MCF 10A (cell line): ENCODE measurements at regions of chr18 and their contacts with region 1.

Region 1: GRCh38 chr18:57621246-57621604 is 411 bp downstream of the NARS1 start:
- DNase-seq: no peak
- H3K4me3 Mint-ChIP-seq: peak overlapping the region; percentile 91
- H3K27ac Mint-ChIP-seq: peak overlapping the region; percentile 93
- H3K4me1 Mint-ChIP-seq: no peaks in the 10 kb centered on the region
- H3K27me3 Mint-ChIP-seq: no peaks in the 10 kb centered on the region
- CTCF ChIP-seq: no peak

Region 2: GRCh38 chr18:57649556-57650500 is 28.6 kb after region 1 on chr18:
- CTCF ChIA-PET with region 1: no interaction called
- POLR2A ChIA-PET with region 1: interaction called, 12 read pairs
- intact Hi-C with region 1: no loop called
- DNase-seq: peak; percentile 89
- H3K4me3 Mint-ChIP-seq: peak overlapping the region; percentile 36
- H3K27ac Mint-ChIP-seq: peak overlapping the region; percentile 89
- H3K4me1 Mint-ChIP-seq: peaks cover 10% of the 10 kb centered on the region
- H3K27me3 Mint-ChIP-seq: no peaks in the 10 kb centered on the region
- CTCF ChIP-seq: no peak

Region 3: DNA sequence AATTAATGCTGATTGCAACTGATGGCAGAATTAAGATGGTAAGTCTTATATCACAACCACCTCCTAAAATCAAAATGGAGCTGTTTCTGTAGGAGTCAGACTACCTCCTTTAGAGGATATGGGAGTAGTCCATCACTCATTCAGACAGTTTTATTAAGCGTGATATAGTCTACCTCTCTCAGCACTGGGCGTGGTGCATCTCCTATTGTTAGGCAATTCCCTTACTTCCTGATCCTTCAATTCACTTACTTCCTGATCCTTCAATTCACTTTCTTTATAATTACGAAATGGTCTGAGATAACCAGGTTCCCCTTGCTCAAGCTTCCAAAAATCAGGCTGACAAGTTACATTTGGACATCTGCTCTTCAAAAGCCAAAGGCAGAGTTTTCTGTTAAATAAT is 150.0 kb after region 1 on chr18:
- CTCF ChIA-PET with region 1: no interaction called
- POLR2A ChIA-PET with region 1: interaction called, 10 read pairs
- intact Hi-C with region 1: no loop called
- DNase-seq: peak; percentile 78
- H3K4me3 Mint-ChIP-seq: no peak overlapping the region
- H3K27ac Mint-ChIP-seq: peak overlapping the region; percentile 49
- H3K4me1 Mint-ChIP-seq: peaks cover 21% of the 10 kb centered on the region
- H3K27me3 Mint-ChIP-seq: no peaks in the 10 kb centered on the region
- CTCF ChIP-seq: no peak